Left colon (tissue), 2 donors: ENCODE measurements at regions of chr1 and their contacts with region 1.

Region 1: DNA sequence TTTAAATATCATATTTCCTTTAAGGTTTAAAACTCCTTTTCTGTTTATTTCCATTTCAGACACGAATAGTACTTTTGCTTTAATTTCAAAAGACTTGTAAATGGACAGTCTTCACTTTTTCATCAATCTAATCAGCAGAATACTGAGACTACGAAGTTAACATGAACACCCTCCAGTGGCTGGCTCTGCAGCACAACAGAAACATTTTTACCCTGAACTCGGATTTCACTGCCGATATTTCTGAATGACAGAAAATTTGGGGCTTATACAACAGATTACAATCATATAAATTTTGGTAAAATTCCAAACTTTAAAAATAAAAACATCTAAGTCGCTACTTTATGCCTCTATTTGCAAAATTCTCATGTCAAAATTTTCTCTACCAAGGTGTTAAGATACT is 86.2 kb downstream of the AKT3 start:
- DNase-seq: no peak
- ATAC-seq: no peak

Region 2: GRCh38 chr1:243713470-243714186 is 50.2 kb before region 1 on chr1:
- intact Hi-C with region 1: no loop called
- DNase-seq: no peak
- ATAC-seq: no peak

Region 3: DNA sequence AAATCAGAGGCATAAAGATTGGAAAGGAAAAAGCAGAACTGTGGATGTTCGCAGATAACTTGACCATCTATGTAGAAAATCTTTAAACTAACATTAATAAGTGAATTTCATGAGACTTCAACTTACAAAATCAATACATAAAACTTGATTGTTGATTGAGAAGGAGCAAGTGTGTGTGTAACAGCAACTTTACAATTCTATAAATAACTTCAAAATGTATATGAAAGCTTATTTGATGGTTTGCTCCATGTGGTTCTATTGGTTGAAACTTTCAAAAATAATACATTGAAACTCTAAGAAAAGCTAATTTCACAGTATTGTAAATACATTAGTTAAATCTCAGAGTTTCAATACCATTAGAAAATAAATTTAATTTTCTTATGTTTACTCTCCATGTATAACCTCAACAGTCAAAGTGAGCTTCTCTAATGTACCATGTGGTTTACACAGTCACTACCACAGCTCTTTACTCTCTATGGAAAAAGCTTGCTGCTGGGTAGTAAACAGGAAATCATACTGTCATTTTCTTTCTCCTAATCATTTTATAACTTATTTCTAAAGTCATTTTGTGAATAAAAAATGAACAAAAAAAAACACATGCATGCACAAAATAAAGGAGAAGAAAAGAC is 74.2 kb after region 1 on chr1:
- intact Hi-C with region 1: loop called in 1 of 2 experiments (anchors 2 kb)
- DNase-seq: no peak
- ATAC-seq: no peak

Region 4: GRCh38 chr1:245245021-245245667 is 1481.3 kb after region 1 on chr1:
- intact Hi-C with region 1: no loop called
- DNase-seq: peak; percentile 49 to 57
- ATAC-seq: peak; percentile 95